ENCODE measurements at regions of chr10 and their contacts with region 1.

Region 1: GRCh38 chr10:69348816-69349541 is 67.7 kb downstream of the TACR2 start:
- DNase-seq: no peak
- H3K4me3 Mint-ChIP-seq: peak overlapping the region; percentile 38
- H3K27ac Mint-ChIP-seq: peak overlapping the region; percentile 71
- H3K4me1 Mint-ChIP-seq: peaks cover 61% of the 10 kb centered on the region
- H3K27me3 Mint-ChIP-seq: no peaks in the 10 kb centered on the region

Region 2: GRCh38 chr10:69327463-69328379 is 21.3 kb before region 1 on chr10:
- intact Hi-C with region 1: loop called (anchors 1 kb)
- DNase-seq: peak; percentile 22
- H3K4me3 Mint-ChIP-seq: peak overlapping the region; percentile 59
- H3K27ac Mint-ChIP-seq: peak overlapping the region; percentile 60
- H3K4me1 Mint-ChIP-seq: peaks cover 34% of the 10 kb centered on the region
- H3K27me3 Mint-ChIP-seq: no peaks in the 10 kb centered on the region

Measured in activated T-helper 2 cell treated with anti-CD3 and anti-CD28 coated beads, Interferon-gamma antibody, Interleukin-2, Interleukin-4, amounts not matched to agents 10 μg/mL and 5 μg/mL and 100 μg/mL, durations not matched to agents 14 hours and 24 hours and 36 hours (primary cell).